Calu3 (cell line): ENCODE measurements at regions of chr4 and their contacts with region 1.

Region 1: DNA sequence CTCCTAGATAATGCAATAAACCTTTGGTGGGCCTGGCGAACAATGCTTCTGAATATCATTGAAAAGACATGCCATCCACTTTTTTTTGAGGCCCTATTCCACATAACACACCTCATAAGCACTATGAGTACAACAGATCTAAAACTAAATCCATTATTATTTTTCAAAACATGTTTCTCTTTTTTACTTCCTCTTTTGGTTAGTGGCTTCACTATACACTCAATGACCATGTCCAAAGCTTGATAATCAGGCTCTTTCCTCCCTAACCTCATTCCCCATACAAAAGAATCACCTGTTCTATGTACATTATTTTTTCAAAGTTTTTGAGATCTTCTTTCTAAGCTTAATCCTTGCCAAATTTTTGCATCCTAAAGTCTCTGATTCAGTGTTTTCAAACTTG is 20.4 kb upstream of the NPY2R start:
- DNase-seq: no peak
- H3K4me3 Mint-ChIP-seq: no peak overlapping the region
- H3K27ac Mint-ChIP-seq: no peak overlapping the region
- H3K4me1 Mint-ChIP-seq: no peaks in the 10 kb centered on the region
- H3K27me3 Mint-ChIP-seq: no peaks in the 10 kb centered on the region
- CTCF ChIP-seq: no peak

Region 2: GRCh38 chr4:155060419-155060818 is 127.6 kb before region 1 on chr4:
- CTCF ChIA-PET with region 1: no interaction called
- intact Hi-C with region 1: no loop called
- DNase-seq: no peak
- H3K4me3 Mint-ChIP-seq: no peak overlapping the region
- H3K27ac Mint-ChIP-seq: no peak overlapping the region
- H3K4me1 Mint-ChIP-seq: no peaks in the 10 kb centered on the region
- H3K27me3 Mint-ChIP-seq: no peaks in the 10 kb centered on the region
- CTCF ChIP-seq: no peak

Region 3: DNA sequence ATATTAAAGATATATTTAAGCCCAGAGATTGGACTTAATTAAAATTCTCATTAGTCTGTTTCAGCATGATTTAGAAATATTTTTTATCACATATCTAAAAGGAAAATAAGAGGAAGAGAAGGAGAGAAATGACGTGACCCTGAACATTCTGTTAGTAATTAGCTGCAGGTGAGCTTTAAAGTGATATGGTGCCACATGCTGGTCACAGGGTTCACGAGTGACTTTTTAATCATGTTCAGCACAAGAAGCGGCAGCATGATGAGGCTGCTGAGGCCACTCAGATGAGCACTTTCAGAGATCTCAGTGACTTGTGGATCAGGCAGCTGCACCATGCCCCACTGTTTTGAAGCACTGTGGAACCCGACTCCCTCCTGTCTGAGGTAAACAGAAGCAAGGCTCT is 17.4 kb before region 1 on chr4:
- CTCF ChIA-PET with region 1: no interaction called
- intact Hi-C with region 1: loop called (anchors 1 kb)
- DNase-seq: no peak
- H3K4me3 Mint-ChIP-seq: no peak overlapping the region
- H3K27ac Mint-ChIP-seq: no peak overlapping the region
- H3K4me1 Mint-ChIP-seq: no peaks in the 10 kb centered on the region
- H3K27me3 Mint-ChIP-seq: no peaks in the 10 kb centered on the region
- CTCF ChIP-seq: no peak